ENCODE measurements at regions of chr14 and their contacts with region 1.

Region 1: GRCh38 chr14:102262929-102263462 is 42.0 kb downstream of the MOK start:
- DNase-seq: peak; percentile 79
- H3K4me3 Mint-ChIP-seq: no peak overlapping the region
- H3K27ac Mint-ChIP-seq: peak overlapping the region; percentile 90
- H3K4me1 Mint-ChIP-seq: peaks cover 41% of the 10 kb centered on the region
- H3K27me3 Mint-ChIP-seq: no peaks in the 10 kb centered on the region
- CTCF ChIP-seq: no peak

Region 2: DNA sequence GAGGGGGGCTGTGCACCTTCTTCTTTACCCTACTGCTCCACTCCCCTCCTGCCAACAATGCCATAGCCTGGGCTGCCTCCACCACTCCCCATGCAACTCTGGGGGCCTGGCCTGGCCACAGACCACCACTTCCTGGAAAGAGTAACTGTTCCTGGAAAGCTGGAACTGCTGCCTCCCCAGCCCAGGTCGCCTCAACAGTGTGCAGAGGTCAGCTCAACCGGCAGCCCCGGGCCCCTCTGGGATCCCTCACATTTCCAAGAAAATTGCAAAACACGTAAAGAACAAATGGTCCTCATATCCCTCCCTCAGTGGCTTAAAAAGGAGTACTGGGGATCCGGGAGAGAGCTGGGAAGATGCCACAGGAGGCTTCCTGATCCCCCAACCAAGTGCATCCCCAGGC is 724.1 kb before region 1 on chr14:
- CTCF ChIA-PET with region 1: no interaction called
- intact Hi-C with region 1: no loop called
- DNase-seq: no peak
- H3K4me3 Mint-ChIP-seq: no peak overlapping the region
- H3K27ac Mint-ChIP-seq: no peak overlapping the region
- H3K4me1 Mint-ChIP-seq: peaks cover 22% of the 10 kb centered on the region
- H3K27me3 Mint-ChIP-seq: peaks cover 15% of the 10 kb centered on the region
- CTCF ChIP-seq: no peak

Region 3: DNA sequence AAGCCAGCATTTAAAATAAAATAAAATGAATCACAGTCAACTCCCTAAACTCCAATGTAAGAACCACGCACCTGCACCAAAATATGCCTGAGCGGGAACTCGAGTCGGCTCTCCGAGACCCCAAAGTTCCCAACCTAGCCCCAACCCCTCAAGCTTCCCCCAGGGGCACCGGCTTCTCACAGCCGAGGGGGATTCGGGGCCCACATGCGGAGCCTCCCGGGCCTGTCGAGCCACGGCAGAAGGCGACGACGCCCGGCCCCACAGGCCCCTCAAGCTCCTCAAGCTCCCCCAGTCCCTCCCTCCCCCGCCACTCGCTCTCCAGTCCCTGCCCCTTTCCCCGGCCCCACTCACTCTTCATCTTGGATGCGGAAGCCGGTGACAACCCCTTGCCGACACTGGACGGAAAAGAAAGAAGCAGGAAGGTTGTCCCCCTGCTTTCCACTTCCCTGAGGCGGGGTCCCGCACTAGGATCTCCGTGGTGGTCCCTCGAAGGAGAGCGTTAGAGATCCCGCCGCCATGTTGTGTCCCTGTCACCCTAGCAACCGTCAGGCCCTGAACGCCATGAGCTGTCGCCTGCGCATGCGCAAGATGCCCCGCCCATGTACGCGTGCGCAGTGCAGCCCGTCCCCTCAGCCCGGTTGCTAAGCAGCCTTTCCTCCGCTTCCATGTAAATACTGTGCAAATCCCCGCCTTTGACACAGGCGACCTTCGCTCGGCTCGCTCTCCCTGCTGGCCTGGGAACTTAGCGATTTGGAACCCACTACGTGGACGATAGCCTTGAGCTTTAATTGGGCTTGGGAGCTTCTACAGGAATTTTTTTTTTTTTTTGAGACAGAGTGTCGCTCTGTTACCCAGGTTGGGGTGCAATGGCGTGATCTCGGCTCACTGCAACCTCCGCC is 41.9 kb after region 1 on chr14 and contains the start of gene MOK:
- CTCF ChIA-PET with region 1: interaction called, 6 read pairs
- intact Hi-C with region 1: loop called (anchors 5 kb)
- DNase-seq: peak; percentile 99
- H3K4me3 Mint-ChIP-seq: peak within 1 kb of the TSS; percentile 90
- H3K27ac Mint-ChIP-seq: peak within 1 kb of the TSS; percentile 99
- H3K4me1 Mint-ChIP-seq: peaks cover 24% of the 10 kb centered on the region
- H3K27me3 Mint-ChIP-seq: no peaks in the 10 kb centered on the region
- CTCF ChIP-seq: no peak
- total RNA-seq, gene MOK: 89.7 and 107 TPM in 2 replicates

Region 4: GRCh38 chr14:102474934-102475333 is 211.9 kb after region 1 on chr14:
- CTCF ChIA-PET with region 1: no interaction called
- intact Hi-C with region 1: no loop called
- DNase-seq: no peak
- H3K4me3 Mint-ChIP-seq: no peak overlapping the region
- H3K27ac Mint-ChIP-seq: no peak overlapping the region
- H3K4me1 Mint-ChIP-seq: no peaks in the 10 kb centered on the region
- H3K27me3 Mint-ChIP-seq: no peaks in the 10 kb centered on the region
- CTCF ChIP-seq: no peak

Region 5: DNA sequence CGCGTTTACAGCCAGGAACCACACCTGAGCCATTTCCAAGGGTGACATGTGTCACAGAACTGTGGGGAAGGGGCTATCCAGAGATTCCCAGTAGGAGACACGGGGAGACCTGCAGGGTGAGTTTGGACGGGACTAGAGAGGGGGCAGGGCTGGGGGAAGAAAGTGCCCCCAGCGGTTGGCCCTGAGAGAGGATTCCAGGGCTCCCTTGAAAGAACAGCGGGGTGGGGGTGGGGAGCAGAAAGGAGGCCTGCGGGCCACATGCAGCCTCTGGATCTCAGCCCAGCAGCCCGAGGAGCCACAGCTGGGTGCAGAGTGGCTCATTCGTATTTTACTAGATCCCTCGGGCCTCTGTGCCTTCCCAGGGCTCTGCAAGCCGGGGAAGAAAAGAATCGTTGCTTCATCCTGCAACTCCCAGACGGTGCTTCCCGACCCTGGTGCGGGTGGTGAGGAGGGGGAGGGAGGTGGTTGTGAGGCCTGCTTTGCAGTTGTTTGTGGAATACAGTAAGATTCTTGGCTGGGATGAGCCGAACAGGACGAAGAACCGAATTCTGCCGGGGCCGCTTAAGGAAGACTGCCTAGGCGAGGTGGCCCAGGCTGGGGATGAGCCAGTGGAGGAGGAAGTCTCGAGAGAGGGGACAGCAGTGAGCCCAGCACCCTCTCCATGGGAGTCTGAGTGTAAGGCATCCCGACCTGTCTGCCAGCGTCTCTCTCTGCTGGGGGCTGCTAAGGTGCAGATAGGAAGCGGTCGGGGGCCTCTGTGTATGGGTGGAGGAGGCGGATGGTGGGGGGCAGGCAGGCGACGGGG is 282.7 kb after region 1 on chr14:
- CTCF ChIA-PET with region 1: no interaction called
- intact Hi-C with region 1: no loop called
- DNase-seq: no peak
- H3K4me3 Mint-ChIP-seq: peak overlapping the region; percentile 41
- H3K27ac Mint-ChIP-seq: no peak overlapping the region
- H3K4me1 Mint-ChIP-seq: no peaks in the 10 kb centered on the region
- H3K27me3 Mint-ChIP-seq: peaks cover 40% of the 10 kb centered on the region
- CTCF ChIP-seq: no peak